ENCODE measurements at regions of chr7 and their contacts with region 1.

Region 1: DNA sequence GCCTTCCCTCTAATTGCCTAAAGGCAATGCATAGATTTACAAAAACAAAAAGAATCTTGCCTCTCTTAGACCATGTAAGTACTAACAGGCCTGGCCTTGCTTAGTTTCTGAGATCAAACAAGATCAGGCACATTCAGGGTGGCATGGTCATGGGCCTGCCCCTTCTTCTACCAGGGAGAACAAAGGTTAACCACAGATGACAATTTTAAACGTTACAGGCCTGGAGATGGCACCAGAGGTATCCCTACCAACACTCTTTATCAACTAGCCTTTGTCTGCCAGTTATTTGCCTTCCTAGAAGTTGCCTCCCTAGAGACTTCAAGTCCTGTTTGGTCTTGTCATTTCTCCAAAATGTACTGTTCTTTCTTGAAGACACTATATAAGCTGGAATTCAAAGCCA is 252.6 kb downstream of the DOCK4 start:
- DNase-seq: peak; percentile 92
- H3K4me3 ChIP-seq: no peak overlapping the region
- H3K27ac ChIP-seq: peak overlapping the region; percentile 73
- H3K4me1 ChIP-seq: peaks cover 13% of the 10 kb centered on the region
- H3K27me3 ChIP-seq: no peaks in the 10 kb centered on the region
- CTCF ChIP-seq: peak; percentile 20 to 58

Region 2: DNA sequence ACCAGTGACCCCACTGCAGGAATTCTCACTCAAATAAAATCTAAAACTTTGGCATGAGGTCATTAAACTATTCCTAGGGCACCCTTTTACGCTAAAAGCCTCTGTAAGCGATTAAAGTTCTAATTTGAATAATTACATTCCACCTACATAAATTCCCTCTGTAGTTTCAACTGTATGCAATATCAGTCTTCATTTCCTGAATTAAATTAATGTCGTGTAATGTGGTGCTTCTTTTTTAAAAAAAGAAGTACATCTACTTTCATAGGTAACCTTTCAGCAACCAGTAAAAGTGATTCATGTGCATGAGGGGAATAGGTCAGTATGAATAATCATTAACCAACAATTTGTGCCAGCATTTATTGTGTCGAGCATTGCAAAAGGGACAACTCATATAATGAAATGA is 436.1 kb before region 1 on chr7:
- CTCF ChIA-PET with region 1: no interaction called
- dilution Hi-C with region 1: no loop called
- in situ Hi-C with region 1: no loop called
- intact Hi-C with region 1: no loop called
- DNase-seq: peak; percentile 44
- H3K4me3 ChIP-seq: no peak overlapping the region
- H3K27ac ChIP-seq: no peak overlapping the region
- H3K4me1 ChIP-seq: peaks cover 3% of the 10 kb centered on the region
- H3K27me3 ChIP-seq: no peaks in the 10 kb centered on the region
- CTCF ChIP-seq: no peak

Region 3: DNA sequence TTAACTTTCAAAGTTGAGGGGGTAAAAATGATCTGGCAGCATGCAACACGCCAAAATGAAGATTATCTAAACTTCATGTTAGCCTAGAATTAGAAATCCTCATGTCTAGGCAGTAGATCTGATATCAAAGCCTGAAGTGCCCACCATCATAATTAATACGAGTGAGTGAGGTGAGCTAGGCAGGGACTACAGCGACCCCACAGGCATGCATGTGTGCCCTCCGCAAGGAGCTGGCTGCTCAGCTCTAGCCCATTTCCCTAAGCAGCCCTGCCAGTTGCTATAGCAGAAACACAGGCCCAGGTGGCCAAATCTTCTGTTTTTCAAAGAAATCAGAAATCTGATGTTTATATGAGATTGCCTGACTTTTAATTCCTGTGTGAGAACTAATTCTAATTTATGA is 403.5 kb after region 1 on chr7:
- CTCF ChIA-PET with region 1: no interaction called
- dilution Hi-C with region 1: no loop called
- in situ Hi-C with region 1: no loop called
- intact Hi-C with region 1: loop called (anchors 10 kb)
- DNase-seq: no peak
- H3K4me3 ChIP-seq: no peak overlapping the region
- H3K27ac ChIP-seq: no peak overlapping the region
- H3K4me1 ChIP-seq: peaks cover 10% of the 10 kb centered on the region
- H3K27me3 ChIP-seq: no peaks in the 10 kb centered on the region
- CTCF ChIP-seq: no peak

Region 4: GRCh38 chr7:112400141-112400540 is 446.5 kb after region 1 on chr7:
- CTCF ChIA-PET with region 1: no interaction called
- dilution Hi-C with region 1: no loop called
- in situ Hi-C with region 1: loop called (anchors 10 to 25 kb)
- intact Hi-C with region 1: no loop called
- DNase-seq: no peak
- H3K4me3 ChIP-seq: no peak overlapping the region
- H3K27ac ChIP-seq: no peak overlapping the region
- H3K4me1 ChIP-seq: no peaks in the 10 kb centered on the region
- H3K27me3 ChIP-seq: no peaks in the 10 kb centered on the region
- CTCF ChIP-seq: no peak

Measured in mammary epithelial cell (primary cell).